ENCODE measurements at regions of chr4 and their contacts with region 1.

Region 1: DNA sequence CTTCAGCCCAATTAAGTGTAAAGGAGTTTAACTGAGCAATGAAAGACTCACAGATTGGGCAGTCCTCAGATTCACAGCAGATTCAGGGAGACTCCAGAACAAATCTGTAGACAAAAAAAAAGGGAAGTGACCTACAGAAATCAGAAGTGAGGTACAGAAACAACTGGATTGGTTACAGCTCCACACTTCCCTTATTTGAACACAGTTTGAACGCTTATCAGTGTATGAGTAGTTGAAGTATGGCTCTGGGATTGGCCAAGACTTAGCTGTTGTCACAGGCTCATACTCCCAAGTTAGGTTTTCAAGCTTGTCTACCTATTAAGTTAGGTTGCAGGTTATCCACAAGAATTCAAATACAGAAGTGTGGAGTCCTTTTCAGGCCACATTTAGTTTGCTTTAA is 112.4 kb upstream of the ELOVL6 start:
- DNase-seq: no peak
- ATAC-seq: no peak
- H3K4me3 ChIP-seq: no peak overlapping the region
- H3K27ac ChIP-seq: no peak overlapping the region
- H3K4me1 ChIP-seq: peaks cover 0 to 7% (median 0%) of the 10 kb centered on the region in 9 donors
- H3K27me3 ChIP-seq: no peaks in the 10 kb centered on the region
- CTCF ChIP-seq: no peak

Region 2: GRCh38 chr4:110005461-110006056 is 305.2 kb before region 1 on chr4:
- intact Hi-C with region 1: loop called in 5 of 10 experiments (anchors 5 to 10 kb)
- DNase-seq: no peak
- ATAC-seq: peak in 1 of 8 donors; percentile 29
- H3K4me3 ChIP-seq: no peak overlapping the region
- H3K27ac ChIP-seq: no peak overlapping the region
- H3K4me1 ChIP-seq: no peaks in the 10 kb centered on the region
- H3K27me3 ChIP-seq: no peaks in the 10 kb centered on the region
- CTCF ChIP-seq: peak; percentile 26 to 79 (median 73)

Region 3: DNA sequence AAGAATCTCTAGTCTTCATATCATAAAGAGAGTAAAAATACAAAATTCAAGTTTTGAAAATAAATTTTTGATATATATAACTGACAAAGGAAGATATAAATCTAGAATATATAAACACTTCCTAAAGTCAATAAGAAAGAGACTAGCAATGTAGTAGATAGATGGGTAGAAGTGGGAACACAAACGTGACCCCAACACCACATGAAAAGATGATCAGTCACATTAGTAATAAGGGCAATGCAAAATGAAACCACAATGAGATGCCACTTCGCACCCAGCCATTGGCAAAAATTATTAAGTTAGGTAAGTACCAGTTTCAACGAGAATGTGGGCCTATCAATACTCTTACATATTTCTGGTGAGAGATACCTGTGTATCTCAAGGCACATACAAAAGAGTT is 291.6 kb before region 1 on chr4:
- intact Hi-C with region 1: loop called in 1 of 10 experiments (anchors 10 kb)
- DNase-seq: no peak
- ATAC-seq: no peak
- H3K4me3 ChIP-seq: no peak overlapping the region
- H3K27ac ChIP-seq: no peak overlapping the region
- H3K4me1 ChIP-seq: no peaks in the 10 kb centered on the region
- H3K27me3 ChIP-seq: peaks cover 0 to 16% (median 0%) of the 10 kb centered on the region in 7 donors
- CTCF ChIP-seq: no peak